ENCODE measurements at regions of chr14 and their contacts with region 1.

Region 1: GRCh38 chr14:74905375-74906142 is 17.5 kb downstream of the RPS6KL1 start:
- DNase-seq: peak; percentile 79
- ATAC-seq: peak; percentile 72
- H3K4me3 ChIP-seq: no peak overlapping the region
- H3K4me3 Mint-ChIP-seq: no peak overlapping the region
- H3K27ac ChIP-seq: peak overlapping the region in 1 of 2 donors; percentile 33
- H3K27ac Mint-ChIP-seq: peak overlapping the region; percentile 73
- H3K4me1 ChIP-seq: peaks cover 17 to 52% of the 10 kb centered on the region in 2 donors
- H3K4me1 Mint-ChIP-seq: peaks cover 41% of the 10 kb centered on the region
- H3K27me3 ChIP-seq: no peaks in the 10 kb centered on the region
- H3K27me3 Mint-ChIP-seq: no peaks in the 10 kb centered on the region
- CTCF ChIP-seq: peak; percentile 93

Region 2: DNA sequence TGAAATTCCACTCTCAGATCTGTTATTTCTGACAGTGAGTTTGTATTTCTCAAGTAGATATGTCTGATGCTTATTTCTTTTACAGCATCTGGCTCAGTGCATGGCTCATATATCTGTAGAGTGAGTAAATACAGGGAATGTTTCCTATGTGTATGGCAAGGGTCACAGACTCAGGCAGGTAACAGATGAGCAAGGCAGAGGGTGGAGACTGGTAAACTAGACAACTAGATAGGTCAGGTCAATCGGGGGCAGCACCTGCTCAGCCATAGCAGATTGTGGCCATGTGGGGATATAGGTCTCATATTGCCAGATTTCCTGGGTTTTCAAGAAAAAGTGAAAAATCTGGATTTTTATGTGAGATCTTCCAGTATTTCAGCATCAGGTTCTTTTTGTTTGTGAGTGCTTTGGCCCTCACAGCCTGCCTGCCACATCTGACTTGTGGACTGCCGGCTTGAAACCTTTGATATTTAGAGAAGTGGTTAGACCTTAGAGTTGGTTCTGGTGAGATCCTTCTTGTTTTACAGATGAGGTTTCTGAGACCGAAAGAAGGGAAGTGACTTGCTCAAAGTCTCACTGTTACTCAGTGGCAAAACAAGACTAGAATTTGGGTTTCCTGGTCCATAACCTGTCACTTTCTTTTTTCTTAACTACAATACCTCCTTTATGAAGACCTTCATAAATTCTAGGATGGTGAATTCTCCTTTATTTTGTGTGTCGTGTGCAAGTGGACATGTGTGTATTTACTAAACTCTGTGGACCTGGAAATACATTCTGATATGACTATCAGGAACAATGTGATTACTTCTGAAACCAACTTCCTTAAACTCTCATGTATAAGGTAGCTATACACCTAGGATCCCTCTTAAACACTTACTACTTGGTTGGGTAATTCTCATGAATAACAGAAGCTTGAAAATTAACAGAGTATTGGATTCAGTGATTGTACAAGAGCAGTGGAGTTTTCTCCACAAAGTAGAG is 64.0 kb before region 1 on chr14:
- CTCF ChIA-PET with region 1: interaction called, 926 read pairs
- POLR2A ChIA-PET with region 1: no interaction called
- intact Hi-C with region 1: no loop called
- DNase-seq: peak; percentile 75
- ATAC-seq: peak; percentile 84
- H3K4me3 ChIP-seq: no peak overlapping the region
- H3K4me3 Mint-ChIP-seq: peak overlapping the region; percentile 65
- H3K27ac ChIP-seq: peak overlapping the region; percentile 70 to 77
- H3K27ac Mint-ChIP-seq: peak overlapping the region; percentile 80
- H3K4me1 ChIP-seq: peaks cover 46 to 47% of the 10 kb centered on the region in 2 donors
- H3K4me1 Mint-ChIP-seq: peaks cover 56% of the 10 kb centered on the region
- H3K27me3 ChIP-seq: no peaks in the 10 kb centered on the region
- H3K27me3 Mint-ChIP-seq: no peaks in the 10 kb centered on the region
- CTCF ChIP-seq: no peak

Region 3: DNA sequence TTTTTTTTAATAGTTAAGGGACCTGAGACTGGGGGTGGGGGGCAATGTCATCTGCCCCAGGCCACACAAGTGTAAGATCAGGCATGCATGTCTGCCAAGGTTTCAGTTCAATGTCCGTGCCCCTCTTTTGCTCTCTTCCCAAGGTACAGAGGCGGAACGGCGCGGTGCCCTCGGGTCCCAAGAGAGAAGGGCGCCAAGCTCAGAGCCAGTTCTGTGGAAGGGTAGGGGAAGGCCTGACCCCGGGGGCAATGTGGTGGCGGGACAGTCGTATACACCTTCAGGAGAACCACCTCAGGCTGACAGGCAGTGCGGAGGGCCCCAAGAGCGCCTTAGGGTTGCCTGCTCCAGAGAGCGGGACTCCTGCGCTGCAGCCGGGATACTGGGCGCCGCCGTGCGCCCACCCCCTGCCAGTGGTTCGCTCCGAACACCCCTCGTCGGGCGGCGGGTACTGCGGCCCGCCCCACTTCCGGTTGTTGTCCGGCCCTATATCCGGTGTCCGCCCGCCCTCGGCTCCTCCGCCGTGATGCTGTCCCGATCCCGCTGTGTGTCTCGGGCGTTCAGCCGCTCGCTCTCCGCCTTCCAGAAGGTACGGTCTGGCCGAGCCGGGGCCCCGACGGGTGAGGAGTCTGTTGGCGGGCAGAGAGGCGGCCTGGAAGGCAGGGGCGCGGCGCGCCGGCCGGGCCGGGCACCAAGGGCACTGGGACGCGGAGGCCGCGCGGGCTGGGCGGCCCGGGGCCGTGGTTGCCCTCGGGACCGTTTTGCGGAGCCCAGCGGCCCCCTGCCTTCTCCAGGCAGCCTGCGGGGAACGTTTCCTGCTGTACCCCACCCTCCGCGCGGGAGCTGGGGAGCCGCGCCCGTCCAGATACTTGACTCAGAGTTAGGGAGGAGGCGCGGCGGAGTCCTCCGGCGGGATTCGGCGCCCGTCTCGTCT is 23.9 kb before region 1 on chr14 and contains the start of gene DLST:
- CTCF ChIA-PET with region 1: interaction called, 926 read pairs
- POLR2A ChIA-PET with region 1: interaction called, 3 read pairs
- intact Hi-C with region 1: no loop called
- DNase-seq: peak; percentile 93
- ATAC-seq: peak; percentile 83
- H3K4me3 ChIP-seq: peak within 1 kb of the TSS; percentile 76 to 94 (median 79)
- H3K4me3 Mint-ChIP-seq: peak within 1 kb of the TSS; percentile 100
- H3K27ac ChIP-seq: peak within 1 kb of the TSS; percentile 80 to 89
- H3K27ac Mint-ChIP-seq: peak within 1 kb of the TSS; percentile 99
- H3K4me1 ChIP-seq: peaks cover 29 to 33% of the 10 kb centered on the region in 2 donors
- H3K4me1 Mint-ChIP-seq: peaks cover 57% of the 10 kb centered on the region
- H3K27me3 ChIP-seq: no peaks in the 10 kb centered on the region
- H3K27me3 Mint-ChIP-seq: no peaks in the 10 kb centered on the region
- CTCF ChIP-seq: no peak
- total RNA-seq, gene DLST: 89.5 and 100 TPM in 2 replicates

Region 4: GRCh38 chr14:74922739-74923401 is 17.3 kb after region 1 on chr14 and contains the start of gene RPS6KL1:
- CTCF ChIA-PET with region 1: interaction called, 12 read pairs
- POLR2A ChIA-PET with region 1: no interaction called
- intact Hi-C with region 1: no loop called
- DNase-seq: peak; percentile 74
- ATAC-seq: peak; percentile 95
- H3K4me3 ChIP-seq: peak within 1 kb of the TSS in 4 of 5 experiments; percentile 45 to 62 (median 54)
- H3K4me3 Mint-ChIP-seq: peak within 1 kb of the TSS; percentile 79
- H3K27ac ChIP-seq: peak within 1 kb of the TSS in 1 of 2 donors; percentile 56
- H3K27ac Mint-ChIP-seq: peak within 1 kb of the TSS; percentile 26
- H3K4me1 ChIP-seq: peaks cover 4 to 13% of the 10 kb centered on the region in 2 donors
- H3K4me1 Mint-ChIP-seq: peaks cover 4% of the 10 kb centered on the region
- H3K27me3 ChIP-seq: no peaks in the 10 kb centered on the region
- H3K27me3 Mint-ChIP-seq: peaks cover 6% of the 10 kb centered on the region
- CTCF ChIP-seq: no peak
- total RNA-seq, gene RPS6KL1: 3.4 TPM in 2 replicates

Region 5: DNA sequence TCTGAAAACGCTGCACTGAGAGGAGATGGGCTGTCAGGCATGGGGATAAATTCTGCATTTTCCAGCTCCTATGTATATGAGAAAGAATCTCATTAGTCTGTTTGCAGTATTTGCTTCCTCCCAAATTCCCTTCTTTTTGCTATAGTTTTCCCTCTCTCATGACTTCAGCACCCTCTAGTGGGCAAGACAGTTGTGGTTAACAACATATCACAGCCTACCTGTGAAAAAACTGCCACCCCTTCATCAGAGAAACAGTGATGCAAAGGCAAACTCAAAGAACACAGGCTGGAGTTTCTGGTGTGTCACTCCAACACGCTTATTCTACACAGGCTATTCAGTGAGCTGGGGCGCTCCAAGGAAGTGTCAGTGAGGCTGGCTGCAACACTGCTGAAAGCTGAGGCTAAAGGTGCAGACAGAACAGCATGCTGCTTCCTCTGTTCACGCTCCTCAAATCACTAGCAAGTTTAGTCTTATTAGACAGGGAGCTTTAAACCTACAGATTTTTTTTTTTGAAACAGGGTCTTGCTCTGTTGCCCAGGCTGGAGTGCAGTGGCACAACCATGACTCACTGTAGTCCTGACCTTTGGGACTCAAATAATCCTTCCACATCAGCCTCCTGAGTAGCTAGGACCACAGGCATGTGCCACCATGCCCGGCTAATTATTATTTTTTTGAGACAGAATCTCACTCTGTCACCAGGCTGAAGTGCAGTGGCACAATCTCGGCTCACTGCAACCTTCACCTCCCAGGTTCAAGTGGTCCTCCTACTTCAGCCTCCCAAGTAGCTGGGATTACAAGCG is 183.2 kb after region 1 on chr14:
- CTCF ChIA-PET with region 1: interaction called, 11 read pairs
- POLR2A ChIA-PET with region 1: no interaction called
- intact Hi-C with region 1: loop called (anchors 2 kb)
- DNase-seq: peak; percentile 65
- ATAC-seq: peak; percentile 51
- H3K4me3 ChIP-seq: no peak overlapping the region
- H3K4me3 Mint-ChIP-seq: no peak overlapping the region
- H3K27ac ChIP-seq: no peak overlapping the region
- H3K27ac Mint-ChIP-seq: no peak overlapping the region
- H3K4me1 ChIP-seq: no peaks in the 10 kb centered on the region
- H3K4me1 Mint-ChIP-seq: no peaks in the 10 kb centered on the region
- H3K27me3 ChIP-seq: no peaks in the 10 kb centered on the region
- H3K27me3 Mint-ChIP-seq: no peaks in the 10 kb centered on the region
- CTCF ChIP-seq: peak; percentile 81